ENCODE measurements at regions of chr17 and their contacts with region 1.

Region 1: DNA sequence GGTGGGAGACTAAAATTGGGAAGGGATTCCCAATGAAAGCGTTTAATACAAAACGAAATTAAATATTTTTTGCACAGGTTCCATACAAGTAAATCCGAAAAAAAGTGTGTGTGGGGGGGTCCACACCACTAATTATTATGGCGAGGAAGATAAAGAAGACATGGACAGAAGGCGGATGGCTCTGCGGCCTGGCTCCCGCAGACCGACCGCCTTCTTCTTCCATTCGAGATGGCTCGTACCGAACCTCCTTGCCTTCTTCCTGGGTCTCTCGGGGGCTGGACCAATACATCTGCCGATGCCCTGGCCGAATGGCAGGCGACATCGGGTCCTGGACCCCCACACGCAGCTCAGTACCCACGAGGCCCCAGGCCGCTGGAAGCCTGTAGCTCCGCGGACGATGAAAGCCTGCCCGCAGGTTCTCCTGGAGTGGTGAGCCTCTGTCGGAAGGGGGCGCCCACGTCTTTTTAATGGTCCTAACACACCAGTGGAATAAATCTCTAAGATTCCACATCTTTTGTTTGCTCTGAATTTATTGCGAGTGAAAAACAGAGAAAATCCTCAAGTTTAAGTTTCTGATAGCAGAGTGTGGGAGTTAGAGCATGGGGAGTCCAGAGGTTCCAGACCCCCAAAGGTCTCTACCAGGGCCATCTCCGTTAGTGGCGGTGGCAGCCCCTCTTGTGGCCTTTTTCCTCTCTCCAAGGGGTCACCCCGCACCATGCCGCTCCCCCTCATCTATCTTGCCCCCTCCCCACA is 1.4 kb downstream of the PRAC2 start:
- DNase-seq: peak; percentile 91 to 98 (median 95)
- ATAC-seq: peak; percentile 40
- H3K4me3 ChIP-seq: no peak overlapping the region
- H3K4me1 ChIP-seq: peaks cover 20% of the 10 kb centered on the region
- CTCF ChIP-seq: peak; percentile 57

Region 2: DNA sequence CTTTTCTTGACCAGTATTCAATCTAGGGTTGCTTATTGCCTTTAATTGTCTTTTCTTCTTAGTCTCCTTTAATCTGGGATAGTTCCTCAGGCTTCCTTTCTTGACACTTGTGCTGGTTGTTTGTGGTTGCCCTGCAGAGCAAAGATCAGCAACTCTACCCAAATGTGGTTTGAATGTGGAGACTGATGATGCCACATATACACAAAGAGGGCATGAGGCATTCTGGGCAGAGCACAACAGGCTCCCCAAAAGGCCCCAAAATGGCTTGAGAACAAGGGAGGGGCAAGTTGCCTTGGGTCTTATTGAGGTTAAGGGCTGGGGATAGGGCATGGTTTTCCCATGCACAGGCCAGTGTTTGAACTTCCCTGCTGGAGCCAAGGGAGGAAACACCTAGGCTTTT is 68.5 kb before region 1 on chr17:
- intact Hi-C with region 1: no loop called
- DNase-seq: no peak
- ATAC-seq: no peak
- H3K4me3 ChIP-seq: no peak overlapping the region
- H3K4me1 ChIP-seq: no peaks in the 10 kb centered on the region
- CTCF ChIP-seq: no peak

Region 3: GRCh38 chr17:48678141-48678971 is 46.1 kb before region 1 on chr17:
- intact Hi-C with region 1: no loop called
- DNase-seq: peak; percentile 74 to 86 (median 85)
- ATAC-seq: peak; percentile 96
- H3K4me3 ChIP-seq: no peak overlapping the region
- H3K4me1 ChIP-seq: peaks cover 11% of the 10 kb centered on the region
- CTCF ChIP-seq: peak; percentile 95

Region 4: GRCh38 chr17:48804925-48805411 is 80.5 kb after region 1 on chr17:
- intact Hi-C with region 1: loop called in 1 of 2 experiments (anchors 5 kb)
- DNase-seq: peak; percentile 67 to 88 (median 83)
- ATAC-seq: peak; percentile 75
- H3K4me3 ChIP-seq: no peak overlapping the region
- H3K4me1 ChIP-seq: peaks cover 41% of the 10 kb centered on the region
- CTCF ChIP-seq: peak; percentile 91

Region 5: GRCh38 chr17:49016788-49017463 is 292.5 kb after region 1 on chr17:
- intact Hi-C with region 1: no loop called
- DNase-seq: peak in 2 of 3 donors; percentile 63 to 65
- ATAC-seq: peak; percentile 36
- H3K4me3 ChIP-seq: no peak overlapping the region
- H3K4me1 ChIP-seq: peaks cover 11% of the 10 kb centered on the region
- CTCF ChIP-seq: no peak